ENCODE measurements at regions of chr19 and their contacts with region 1.

Region 1: DNA sequence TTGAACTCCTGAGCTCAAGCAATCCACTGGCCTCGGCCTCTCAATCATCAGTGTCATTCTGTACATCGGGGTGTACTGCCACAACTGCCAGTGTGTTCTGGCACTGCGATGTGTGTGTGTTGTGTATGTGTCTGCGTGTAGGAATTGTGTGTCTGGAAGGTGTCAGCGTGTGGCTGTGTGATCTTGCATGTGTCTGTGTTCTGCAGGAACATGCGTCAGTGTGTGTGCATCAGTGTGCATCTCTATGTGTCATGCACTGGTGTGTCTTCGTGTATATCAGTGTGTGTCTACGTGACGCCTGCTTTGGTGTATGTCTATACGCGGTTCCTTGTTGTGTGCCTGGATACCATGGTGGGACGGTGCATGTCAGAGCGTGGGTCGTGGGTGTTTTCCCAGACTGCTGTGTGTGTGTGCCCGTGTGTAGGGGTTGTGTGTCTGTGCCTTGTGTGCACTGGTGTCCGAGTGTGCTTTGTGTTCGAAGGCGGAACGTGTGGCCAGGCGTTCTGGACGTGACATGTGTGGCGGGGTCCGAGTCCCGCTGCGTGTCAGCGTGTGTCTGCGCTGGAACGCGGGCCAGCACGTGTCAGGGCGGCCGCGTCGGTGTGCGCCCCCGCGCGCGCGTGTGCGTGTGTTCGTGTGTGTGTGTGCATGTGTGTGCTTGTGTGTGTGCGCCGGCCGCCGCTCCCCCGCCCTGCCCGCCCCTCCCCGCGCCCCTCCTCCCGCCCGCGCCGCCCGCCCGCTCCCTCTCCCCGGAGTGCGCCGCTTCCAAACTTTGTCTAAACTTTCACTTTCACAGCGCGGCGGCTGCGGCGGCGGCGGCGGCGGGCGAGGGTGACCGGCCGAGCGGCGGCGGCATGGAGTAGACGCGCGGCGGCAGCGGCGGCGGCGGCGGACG is at the start of gene NFIX:
- DNase-seq: peak; percentile 73 to 83 (median 82)
- ATAC-seq: peak; percentile 10 to 47 (median 41)
- H3K4me3 ChIP-seq: peak within 1 kb of the TSS; percentile 72 to 90 (median 80)
- H3K27ac ChIP-seq: peak within 1 kb of the TSS; percentile 53 to 97 (median 88)
- H3K4me1 ChIP-seq: peaks cover 0 to 27% (median 16%) of the 10 kb centered on the region in 12 donors
- H3K27me3 ChIP-seq: peaks cover 0 to 5% (median 0%) of the 10 kb centered on the region in 9 donors
- CTCF ChIP-seq: peak in 1 of 12 donors; percentile 8
- POLR2A ChIP-seq: no peak
- total RNA-seq, gene NFIX: 81.4 to 147 (median 122) TPM

Region 2: DNA sequence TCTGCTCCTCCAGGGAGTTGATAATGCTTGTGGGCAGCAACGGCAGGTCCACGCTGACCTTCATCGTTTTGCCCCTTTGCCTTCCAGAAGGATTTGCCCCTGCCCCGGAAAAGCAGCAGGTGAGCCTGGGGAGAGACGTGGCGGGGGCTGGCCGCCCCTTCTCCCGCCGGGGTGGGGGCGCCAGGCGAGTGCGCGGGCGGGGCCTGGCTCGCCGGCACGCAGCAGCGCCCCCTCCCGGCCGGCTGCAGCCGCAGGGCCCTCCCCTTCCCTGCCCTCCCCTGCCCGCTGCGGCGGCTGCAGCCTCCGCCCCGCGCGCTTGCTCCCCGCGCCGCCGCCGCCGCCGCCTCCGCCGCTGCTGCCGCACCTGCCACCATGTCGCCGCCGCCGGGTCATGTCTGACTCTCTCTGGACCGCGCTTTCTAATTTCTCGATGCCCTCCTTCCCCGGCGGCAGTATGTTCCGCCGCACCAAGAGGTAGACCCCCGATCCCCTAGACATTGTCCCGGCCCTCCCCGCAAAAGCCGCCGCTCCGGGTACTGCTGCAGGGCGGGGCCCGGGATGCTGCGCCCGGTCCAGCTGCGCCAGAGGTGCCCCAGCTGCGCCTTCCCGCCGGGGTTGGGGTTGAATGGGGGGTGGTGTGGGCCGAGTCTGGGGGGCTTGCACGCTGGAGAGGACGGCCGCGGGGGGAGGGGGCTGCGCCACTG is 156.6 kb before region 1 on chr19 and contains the start of gene MAST1:
- intact Hi-C with region 1: no loop called
- DNase-seq: no peak
- ATAC-seq: peak in 3 of 4 donors; percentile 44 to 73 (median 68)
- H3K4me3 ChIP-seq: peak within 1 kb of the TSS in 10 of 12 donors; percentile 8 to 43 (median 30)
- H3K27ac ChIP-seq: no peak within 1 kb of the TSS
- H3K4me1 ChIP-seq: peaks cover 0 to 31% (median 11%) of the 10 kb centered on the region in 12 donors
- H3K27me3 ChIP-seq: peaks cover 43 to 98% (median 94%) of the 10 kb centered on the region in 9 donors
- CTCF ChIP-seq: peak in 9 of 12 donors; percentile 23 to 72 (median 48)
- POLR2A ChIP-seq: no peak
- total RNA-seq, gene MAST1: 0.27 to 1.7 (median 0.31) TPM in 6 of 9 donors, not detected in the others

Region 3: DNA sequence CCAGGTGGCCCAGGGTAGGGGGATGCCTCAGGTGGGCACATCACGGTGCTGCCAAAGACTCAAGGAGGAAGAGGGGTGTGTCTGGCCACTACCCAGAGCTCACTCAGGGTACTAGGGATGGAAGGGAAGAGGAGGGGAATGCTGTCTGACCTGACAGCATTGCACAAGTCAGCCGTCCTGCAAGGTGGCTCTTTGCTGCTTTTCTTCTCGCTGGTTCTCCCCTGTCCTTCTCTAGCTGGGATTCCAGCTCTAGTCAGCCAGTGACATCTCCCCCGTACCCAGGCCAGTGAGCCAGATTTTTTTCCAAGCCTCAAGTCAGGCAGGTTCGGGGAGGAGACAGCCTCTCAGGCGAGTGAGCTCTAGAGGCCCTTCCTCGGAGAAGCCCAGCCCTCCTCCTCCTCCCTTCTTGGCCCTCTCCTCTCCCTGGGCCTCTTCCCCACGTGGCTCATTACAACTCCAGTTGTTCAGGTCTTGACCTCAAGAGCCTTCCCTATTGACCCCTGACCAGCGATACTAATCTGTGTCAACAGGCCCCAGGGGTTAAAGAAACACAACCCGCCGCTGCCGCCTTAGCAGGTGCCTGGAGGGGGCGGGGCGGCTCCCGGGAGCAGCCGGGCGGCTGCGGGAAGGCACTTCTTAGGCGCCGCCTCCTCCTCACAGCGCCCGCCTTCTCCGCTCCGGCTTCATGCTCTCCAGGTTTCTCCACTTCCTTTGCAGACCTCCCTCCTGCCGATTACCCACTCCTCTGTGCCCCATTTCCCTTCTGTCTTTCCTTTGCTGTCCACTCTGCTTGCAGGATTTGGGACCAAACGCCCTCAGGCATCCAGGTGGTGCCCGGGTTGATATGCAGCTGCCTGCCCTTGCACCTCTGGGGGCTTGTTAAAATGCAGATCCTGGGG is 56.6 kb after region 1 on chr19:
- intact Hi-C with region 1: loop called in 1 of 10 experiments (anchors 5 kb)
- DNase-seq: peak in 4 of 5 donors; percentile 71 to 81 (median 72)
- ATAC-seq: peak in 2 of 4 donors; percentile 7 to 22
- H3K4me3 ChIP-seq: peak overlapping the region in 5 of 12 donors; percentile 5 to 33 (median 20)
- H3K27ac ChIP-seq: peak overlapping the region in 11 of 12 donors; percentile 90 to 99 (median 97)
- H3K4me1 ChIP-seq: peaks cover 29 to 94% (median 81%) of the 10 kb centered on the region in 12 donors
- H3K27me3 ChIP-seq: no peaks in the 10 kb centered on the region
- CTCF ChIP-seq: no peak
- POLR2A ChIP-seq: no peak

Region 4: DNA sequence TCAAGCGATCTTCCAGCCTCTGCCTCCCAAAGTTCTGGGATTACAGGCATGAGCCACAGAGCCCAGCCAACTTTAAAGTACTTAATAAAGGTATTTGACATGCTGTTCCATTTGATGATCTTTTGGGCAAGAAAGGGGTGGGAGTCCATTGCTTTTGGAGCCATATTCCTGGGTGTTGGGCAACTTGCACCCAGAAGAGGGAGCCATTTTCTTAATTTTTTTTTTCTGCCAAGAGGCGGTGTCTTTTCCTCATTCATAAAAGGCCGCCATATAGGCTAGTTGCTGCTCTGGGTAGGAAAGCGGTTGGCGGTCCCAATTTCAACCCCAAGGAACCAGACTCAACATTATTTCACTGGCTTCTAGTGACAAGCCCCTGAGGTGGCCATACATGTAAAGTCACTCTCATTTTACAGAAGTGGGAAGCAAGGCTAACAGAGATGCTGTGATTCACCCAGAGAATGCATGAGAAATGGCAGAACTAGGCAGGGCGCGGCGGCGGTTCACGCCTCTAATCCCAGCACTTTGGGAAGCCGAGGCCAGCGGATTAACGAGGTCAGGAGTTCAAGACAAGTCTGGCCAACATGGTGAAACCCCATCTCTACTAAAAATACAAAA is 371.7 kb after region 1 on chr19:
- intact Hi-C with region 1: no loop called
- DNase-seq: no peak
- ATAC-seq: no peak
- H3K4me3 ChIP-seq: no peak overlapping the region
- H3K27ac ChIP-seq: no peak overlapping the region
- H3K4me1 ChIP-seq: no peaks in the 10 kb centered on the region
- H3K27me3 ChIP-seq: peaks cover 0 to 9% (median 3%) of the 10 kb centered on the region in 9 donors
- CTCF ChIP-seq: peak in 7 of 12 donors; percentile 9 to 36 (median 17)
- POLR2A ChIP-seq: no peak

Measured in heart left ventricle (tissue), 16 donors.